ENCODE measurements at regions of chr7 and their contacts with region 1.

Region 1: DNA sequence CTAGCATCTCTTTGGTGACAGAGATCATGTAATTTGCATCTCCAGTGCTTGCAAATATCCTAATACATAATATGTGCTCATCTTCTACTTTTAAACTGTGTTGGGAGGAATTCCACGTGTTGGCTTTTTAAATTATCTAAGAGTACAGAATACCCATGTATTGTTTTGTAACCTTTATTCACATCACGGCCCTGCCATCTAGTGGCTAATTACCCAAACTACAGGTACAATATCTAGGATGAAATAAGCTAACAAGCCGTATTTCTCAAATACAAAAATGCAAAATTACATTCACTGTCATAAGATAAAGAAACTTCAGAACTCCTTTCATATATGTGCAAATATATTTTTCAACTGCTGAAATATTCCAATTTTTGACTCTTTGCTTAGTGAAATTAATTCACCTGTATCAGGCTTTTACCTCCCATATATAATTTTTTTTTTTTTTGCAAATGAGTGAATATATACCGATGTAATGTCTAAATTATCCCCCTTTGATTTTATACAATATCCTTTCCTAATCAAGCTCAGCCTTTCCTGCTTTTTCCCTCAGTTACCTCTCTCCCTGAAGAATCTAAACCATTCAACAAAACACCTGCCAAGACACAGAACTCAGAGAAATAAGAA is 30.3 kb upstream of the LSM8 start:
- DNase-seq: peak in 13 of 35 experiments; percentile 1 to 58 (median 6)
- ATAC-seq: no peak
- H3K4me3 ChIP-seq: no peak overlapping the region
- H3K4me3 Mint-ChIP-seq: no peak overlapping the region
- H3K27ac ChIP-seq: no peak overlapping the region
- H3K27ac Mint-ChIP-seq: no peak overlapping the region
- H3K4me1 ChIP-seq: no peaks in the 10 kb centered on the region
- H3K4me1 Mint-ChIP-seq: no peaks in the 10 kb centered on the region
- H3K27me3 ChIP-seq: peaks cover 0 to 3% of the 10 kb centered on the region in 2 experiments
- H3K27me3 Mint-ChIP-seq: peaks cover 21 to 22% of the 10 kb centered on the region in 2 donors

Region 2: GRCh38 chr7:117014673-117015133 is 1139.0 kb before region 1 on chr7:
- CTCF ChIA-PET with region 1: no interaction called
- POLR2A ChIA-PET with region 1: no interaction called
- DNase-seq: peak in 5 of 35 experiments; percentile 1 to 29 (median 3)
- ATAC-seq: peak in 2 of 4 experiments; percentile 44 to 66
- H3K4me3 ChIP-seq: no peak overlapping the region
- H3K4me3 Mint-ChIP-seq: no peak overlapping the region
- H3K27ac ChIP-seq: no peak overlapping the region
- H3K27ac Mint-ChIP-seq: no peak overlapping the region
- H3K4me1 ChIP-seq: peaks cover 19 to 23% of the 10 kb centered on the region in 2 experiments
- H3K4me1 Mint-ChIP-seq: peaks cover 30 to 51% (median 48%) of the 10 kb centered on the region in 3 donors
- H3K27me3 ChIP-seq: peaks cover 0 to 7% of the 10 kb centered on the region in 2 experiments
- H3K27me3 Mint-ChIP-seq: peaks cover 0 to 4% of the 10 kb centered on the region in 2 donors

Region 3: GRCh38 chr7:118129041-118129795 is 24.4 kb before region 1 on chr7:
- CTCF ChIA-PET with region 1: no interaction called
- POLR2A ChIA-PET with region 1: no interaction called
- DNase-seq: no peak
- ATAC-seq: peak in 1 of 4 experiments; percentile 27
- H3K4me3 ChIP-seq: no peak overlapping the region
- H3K4me3 Mint-ChIP-seq: no peak overlapping the region
- H3K27ac ChIP-seq: no peak overlapping the region
- H3K27ac Mint-ChIP-seq: no peak overlapping the region
- H3K4me1 ChIP-seq: no peaks in the 10 kb centered on the region
- H3K4me1 Mint-ChIP-seq: peaks cover 0 to 2% (median 0%) of the 10 kb centered on the region in 3 donors
- H3K27me3 ChIP-seq: no peaks in the 10 kb centered on the region
- H3K27me3 Mint-ChIP-seq: peaks cover 4 to 14% of the 10 kb centered on the region in 2 donors

Region 4: GRCh38 chr7:118214051-118214832 is 60.6 kb after region 1 on chr7:
- CTCF ChIA-PET with region 1: interaction called, 3 to 11 read pairs
- POLR2A ChIA-PET with region 1: no interaction called
- DNase-seq: peak; percentile 41 to 81 (median 64)
- ATAC-seq: peak; percentile 88 to 92 (median 92)
- H3K4me3 ChIP-seq: peak overlapping the region; percentile 64 to 88
- H3K4me3 Mint-ChIP-seq: peak overlapping the region; percentile 81 to 87 (median 85)
- H3K27ac ChIP-seq: peak overlapping the region; percentile 20
- H3K27ac Mint-ChIP-seq: peak overlapping the region; percentile 84 to 85
- H3K4me1 ChIP-seq: peaks cover 0 to 11% of the 10 kb centered on the region in 2 experiments
- H3K4me1 Mint-ChIP-seq: peaks cover 13 to 18% (median 14%) of the 10 kb centered on the region in 3 donors
- H3K27me3 ChIP-seq: peaks cover 0 to 10% of the 10 kb centered on the region in 2 experiments
- H3K27me3 Mint-ChIP-seq: peaks cover 13 to 25% of the 10 kb centered on the region in 2 donors

Region 5: DNA sequence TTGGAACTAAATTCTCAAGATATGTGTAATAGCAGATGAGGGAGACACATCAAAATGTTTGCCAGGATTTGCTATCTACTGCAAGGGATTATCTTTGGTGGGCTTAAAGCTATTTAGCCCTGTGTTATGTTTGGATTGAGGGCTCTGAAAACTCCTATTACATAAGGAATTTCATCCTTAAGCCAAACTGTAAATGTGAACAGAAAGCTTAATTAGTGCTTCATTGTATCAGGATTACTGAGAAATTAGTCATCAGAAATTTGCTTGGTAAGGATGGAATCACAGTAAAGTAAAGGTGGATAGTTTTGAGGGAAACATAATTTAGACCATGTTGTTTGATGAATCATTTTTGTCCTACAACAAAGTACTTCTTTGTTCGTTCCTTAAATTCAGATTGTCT is 79.2 kb after region 1 on chr7:
- CTCF ChIA-PET with region 1: no interaction called
- POLR2A ChIA-PET with region 1: no interaction called
- DNase-seq: no peak
- ATAC-seq: no peak
- H3K4me3 ChIP-seq: no peak overlapping the region
- H3K4me3 Mint-ChIP-seq: no peak overlapping the region
- H3K27ac ChIP-seq: no peak overlapping the region
- H3K27ac Mint-ChIP-seq: no peak overlapping the region
- H3K4me1 ChIP-seq: no peaks in the 10 kb centered on the region
- H3K4me1 Mint-ChIP-seq: no peaks in the 10 kb centered on the region
- H3K27me3 ChIP-seq: no peaks in the 10 kb centered on the region
- H3K27me3 Mint-ChIP-seq: peaks cover 5 to 8% of the 10 kb centered on the region in 2 donors

Measured in T-cell (primary cell).